Ovary (tissue), 10 donors: ENCODE measurements at regions of chr1 and their contacts with region 1.

Region 1: DNA sequence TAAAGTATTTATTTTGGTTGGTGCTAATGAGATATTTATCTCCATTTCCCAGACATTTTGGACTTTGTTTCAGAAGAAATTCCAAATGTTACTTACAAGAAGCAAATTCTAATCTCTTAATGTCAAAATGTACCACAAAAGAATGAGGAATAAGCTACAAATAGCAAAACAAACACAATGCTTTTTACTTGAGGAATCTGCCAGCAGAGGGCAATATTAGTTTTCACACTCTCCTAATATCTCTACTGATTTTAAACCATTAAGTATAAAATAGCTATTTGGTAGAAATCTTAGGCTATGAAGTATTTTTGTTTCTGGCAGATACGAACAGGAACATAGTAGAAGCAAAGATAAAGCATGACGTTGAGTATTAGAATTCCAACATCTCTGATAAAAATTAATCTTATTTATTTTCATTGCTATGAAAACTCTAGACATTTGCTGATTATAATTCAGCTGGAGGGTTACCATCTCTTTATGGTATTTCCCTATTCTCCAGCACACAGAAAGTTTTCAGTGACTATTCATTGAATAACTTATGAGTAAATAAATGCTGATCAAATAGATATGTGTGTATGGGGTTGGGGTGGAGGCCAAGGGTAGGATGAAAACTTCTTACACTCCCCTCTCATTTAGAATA is 13.4 kb upstream of the HMCN1 start:
- DNase-seq: no peak
- H3K4me3 ChIP-seq: no peak overlapping the region
- H3K27ac ChIP-seq: no peak overlapping the region
- H3K4me1 ChIP-seq: no peaks in the 10 kb centered on the region
- H3K27me3 ChIP-seq: no peaks in the 10 kb centered on the region
- CTCF ChIP-seq: peak in 1 of 3 donors; percentile 23
- EP300 ChIP-seq: no peak
- POLR2A ChIP-seq: no peak

Region 2: DNA sequence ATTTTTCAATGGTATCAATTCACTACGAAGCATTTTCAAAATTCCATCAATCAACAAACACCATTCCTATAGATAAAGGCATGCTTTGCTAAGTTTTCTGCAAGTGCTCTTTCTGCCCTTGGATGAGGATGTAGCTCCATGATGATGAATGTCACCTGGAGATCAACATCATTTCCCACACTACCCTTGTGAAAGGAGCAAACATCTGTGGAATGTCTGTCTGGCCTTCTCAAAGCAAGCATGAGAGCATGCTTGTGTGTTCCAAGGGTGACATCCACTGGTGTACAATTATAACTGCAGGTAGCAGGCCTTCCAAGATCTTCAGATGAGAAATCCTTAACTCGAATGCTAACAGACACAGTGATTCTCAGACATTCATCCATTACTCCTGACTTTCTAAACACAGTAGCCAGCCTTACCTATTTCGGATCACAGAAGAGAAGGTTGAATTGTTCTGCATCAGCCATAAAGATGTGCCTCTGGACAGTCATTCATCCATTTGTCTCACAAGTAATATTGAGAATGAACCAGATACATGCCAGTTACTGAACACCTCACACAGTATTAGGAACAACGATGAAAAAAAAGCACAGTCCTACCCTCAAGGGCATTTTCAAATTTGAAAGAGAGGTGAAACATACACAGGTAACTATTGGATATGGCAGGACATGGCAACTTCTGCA is 491.9 kb after region 1 on chr1:
- intact Hi-C with region 1: loop called in 1 of 4 experiments (anchors 10 kb)
- DNase-seq: peak in 2 of 5 donors; percentile 11 to 27
- H3K4me3 ChIP-seq: no peak overlapping the region
- H3K27ac ChIP-seq: no peak overlapping the region
- H3K4me1 ChIP-seq: no peaks in the 10 kb centered on the region
- H3K27me3 ChIP-seq: no peaks in the 10 kb centered on the region
- CTCF ChIP-seq: peak in 2 of 3 donors; percentile 33 to 72
- EP300 ChIP-seq: no peak
- POLR2A ChIP-seq: no peak